ENCODE measurements at regions of chr6 and their contacts with region 1.

Region 1: DNA sequence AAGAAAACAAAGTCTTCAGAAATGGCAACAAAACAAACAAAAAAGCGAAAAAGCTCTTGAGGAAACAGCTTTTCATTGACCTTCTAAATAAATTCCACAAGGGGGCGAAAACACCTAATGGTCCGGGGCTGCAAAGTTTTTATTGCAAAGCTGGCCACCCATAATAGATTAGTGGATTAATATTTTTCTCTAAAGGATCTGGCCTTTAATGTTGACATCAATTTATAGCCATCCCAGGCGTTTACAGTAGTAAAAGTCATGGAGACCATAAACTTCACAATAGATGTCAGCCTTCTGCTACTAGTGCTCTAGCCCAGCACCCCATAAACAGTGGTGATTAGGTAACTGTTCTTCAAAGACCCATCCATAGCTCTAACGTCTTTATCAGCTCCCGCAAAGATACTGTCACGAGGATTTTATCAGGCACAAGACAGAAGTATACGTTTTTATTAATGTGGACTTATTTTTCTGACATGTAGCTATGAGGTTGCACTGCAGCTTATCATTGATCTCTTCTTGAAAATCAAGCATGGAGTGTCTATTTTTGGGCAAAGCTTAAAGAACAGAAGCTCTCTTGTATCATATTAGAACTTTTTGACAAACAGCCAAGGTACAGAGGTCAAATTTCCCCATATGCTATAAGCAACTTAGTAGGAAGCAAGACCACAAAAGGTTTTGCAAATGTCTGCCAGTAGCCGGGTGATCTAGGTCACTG is 4.7 kb downstream of the CITED2 start:
- DNase-seq: no peak
- ATAC-seq: peak in 1 of 2 donors; percentile 4
- H3K4me3 ChIP-seq: peak overlapping the region; percentile 6 to 97 (median 56)
- H3K27ac ChIP-seq: peak overlapping the region; percentile 94 to 97 (median 96)
- H3K4me1 ChIP-seq: peaks cover 24 to 30% of the 10 kb centered on the region in 2 donors
- H3K27me3 ChIP-seq: no peaks in the 10 kb centered on the region
- CTCF ChIP-seq: peak; percentile 44 to 78 (median 74)
- POLR2A ChIP-seq: no peak

Region 2: DNA sequence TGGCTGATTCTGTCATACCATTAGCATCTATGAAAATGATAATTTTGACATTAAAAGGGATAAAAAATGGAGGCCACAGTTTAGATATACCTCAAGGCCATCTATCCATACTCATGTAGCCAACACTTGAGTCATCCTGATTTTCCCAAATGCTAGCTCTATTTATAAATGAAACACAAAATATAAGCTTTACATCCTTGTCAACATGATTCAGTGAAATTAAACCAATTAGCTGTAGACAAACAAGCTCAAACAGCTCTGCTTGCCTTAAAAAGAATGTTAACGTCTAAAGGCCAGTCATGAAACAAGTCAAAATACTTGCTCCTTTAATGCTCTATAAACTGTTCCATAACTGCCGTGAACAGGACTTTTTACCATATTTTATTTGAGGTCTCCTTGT is 300.9 kb before region 1 on chr6:
- in situ Hi-C with region 1: no loop called
- intact Hi-C with region 1: no loop called
- DNase-seq: no peak
- ATAC-seq: no peak
- H3K4me3 ChIP-seq: no peak overlapping the region
- H3K27ac ChIP-seq: no peak overlapping the region
- H3K4me1 ChIP-seq: peaks cover 14 to 15% of the 10 kb centered on the region in 2 donors
- H3K27me3 ChIP-seq: no peaks in the 10 kb centered on the region
- CTCF ChIP-seq: no peak
- POLR2A ChIP-seq: no peak

Region 3: DNA sequence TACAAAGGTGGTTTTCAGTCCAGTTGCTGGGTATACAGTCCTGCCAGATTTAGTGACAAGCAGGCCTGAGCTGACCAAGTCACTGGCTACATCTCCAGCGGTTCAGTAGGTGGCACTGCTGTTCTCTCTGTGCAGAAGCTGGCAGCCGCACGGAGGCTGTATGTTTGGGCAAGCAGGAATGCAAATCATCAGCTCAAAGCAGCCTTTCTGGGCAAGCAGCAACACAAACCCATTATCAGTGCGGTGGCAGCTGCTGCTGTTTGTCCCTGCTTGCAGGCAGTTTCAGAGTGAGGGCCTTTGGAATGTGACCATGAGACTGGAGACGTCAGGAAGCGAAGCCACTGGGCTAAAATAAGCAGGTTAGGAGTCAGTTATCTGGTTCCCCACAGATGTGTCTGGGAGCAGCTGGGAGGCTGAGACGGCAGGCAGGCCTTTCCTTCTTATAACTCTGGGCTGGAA is 150.4 kb before region 1 on chr6:
- in situ Hi-C with region 1: loop called in 1 of 4 experiments (anchors 5 kb)
- intact Hi-C with region 1: loop called (anchors 1 kb)
- DNase-seq: peak; percentile 78 to 85
- ATAC-seq: peak; percentile 98 to 99
- H3K4me3 ChIP-seq: peak overlapping the region in 1 of 4 donors; percentile 3
- H3K27ac ChIP-seq: peak overlapping the region; percentile 41 to 76 (median 70)
- H3K4me1 ChIP-seq: peaks cover 0 to 4% of the 10 kb centered on the region in 2 donors
- H3K27me3 ChIP-seq: no peaks in the 10 kb centered on the region
- CTCF ChIP-seq: peak; percentile 73 to 90 (median 82)
- POLR2A ChIP-seq: peak in 1 of 2 donors; percentile 52

Region 4: DNA sequence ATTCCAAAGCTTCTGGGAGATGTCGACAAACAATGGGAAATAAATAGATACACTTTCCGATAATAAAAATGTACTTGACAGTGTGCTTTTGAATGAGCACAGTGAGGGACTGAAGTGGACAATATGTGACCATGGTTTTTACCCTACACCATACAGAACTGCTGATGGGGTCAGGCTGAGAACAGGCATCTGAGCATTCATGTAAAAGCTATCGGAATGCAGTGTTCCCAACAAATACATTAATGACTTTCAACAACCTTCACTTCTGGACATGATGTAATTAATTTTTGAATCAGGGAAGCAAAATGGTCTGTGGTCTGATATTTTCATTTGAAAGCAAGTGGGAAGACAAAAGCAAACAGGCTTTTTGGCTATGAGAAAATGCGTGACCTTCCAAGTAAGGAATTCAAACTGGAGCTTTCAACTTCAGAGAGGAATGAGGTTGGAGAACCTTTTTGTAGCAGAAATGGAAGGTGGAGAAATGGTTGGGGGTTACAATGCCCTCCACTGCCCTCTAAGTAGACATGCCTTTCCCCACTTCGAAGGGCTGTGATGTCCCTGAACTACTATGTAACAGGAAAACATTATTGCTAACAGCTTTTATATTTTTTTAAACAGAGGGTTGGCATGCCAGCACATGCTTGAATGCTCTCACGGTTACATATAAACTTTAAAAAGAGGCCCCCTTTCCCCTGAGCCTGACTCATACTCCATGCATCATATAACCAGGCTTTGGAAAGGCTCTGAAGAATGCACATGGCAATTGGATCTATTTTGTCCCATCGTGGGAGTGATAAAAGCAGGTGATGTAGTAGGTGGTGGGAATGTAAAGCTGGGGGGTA is 208.3 kb after region 1 on chr6:
- in situ Hi-C with region 1: no loop called
- intact Hi-C with region 1: no loop called
- DNase-seq: no peak
- ATAC-seq: no peak
- H3K4me3 ChIP-seq: no peak overlapping the region
- H3K27ac ChIP-seq: no peak overlapping the region
- H3K4me1 ChIP-seq: peaks cover 0 to 6% of the 10 kb centered on the region in 2 donors
- H3K27me3 ChIP-seq: no peaks in the 10 kb centered on the region
- CTCF ChIP-seq: no peak
- POLR2A ChIP-seq: no peak

Region 5: DNA sequence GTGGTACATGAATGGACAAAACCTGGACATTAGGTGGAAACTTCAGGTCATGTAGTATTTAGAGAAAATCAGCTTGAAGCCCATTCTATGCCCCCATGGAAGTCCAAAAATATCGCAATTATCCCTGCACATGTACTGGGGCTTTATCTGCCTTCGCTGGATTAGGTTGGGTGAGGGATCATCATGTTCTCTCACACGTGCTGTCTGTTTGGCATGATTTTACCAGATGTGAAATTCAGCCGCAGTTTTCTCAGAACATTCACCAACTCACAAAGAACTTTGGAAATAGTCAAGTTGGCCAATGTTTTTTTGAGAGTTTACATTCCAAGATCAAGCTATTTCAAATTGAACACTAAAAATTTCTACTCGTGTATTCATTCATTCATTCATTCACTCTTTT is 464.5 kb after region 1 on chr6:
- in situ Hi-C with region 1: no loop called
- intact Hi-C with region 1: loop called (anchors 2 kb)
- DNase-seq: peak in 1 of 2 donors; percentile 18
- ATAC-seq: peak; percentile 14 to 58
- H3K4me3 ChIP-seq: no peak overlapping the region
- H3K27ac ChIP-seq: no peak overlapping the region
- H3K4me1 ChIP-seq: peaks cover 20 to 25% of the 10 kb centered on the region in 2 donors
- H3K27me3 ChIP-seq: no peaks in the 10 kb centered on the region
- CTCF ChIP-seq: no peak
- POLR2A ChIP-seq: no peak

Region 6: GRCh38 chr6:140043336-140043735 is 673.6 kb after region 1 on chr6:
- in situ Hi-C with region 1: no loop called
- intact Hi-C with region 1: loop called (anchors 1 kb)
- DNase-seq: no peak
- ATAC-seq: peak; percentile 87 to 90
- H3K4me3 ChIP-seq: no peak overlapping the region
- H3K27ac ChIP-seq: peak overlapping the region; percentile 45 to 75 (median 55)
- H3K4me1 ChIP-seq: peaks cover 14 to 15% of the 10 kb centered on the region in 2 donors
- H3K27me3 ChIP-seq: no peaks in the 10 kb centered on the region
- CTCF ChIP-seq: no peak
- POLR2A ChIP-seq: no peak

Region 7: GRCh38 chr6:140921366-140922226 is 1551.9 kb after region 1 on chr6:
- in situ Hi-C with region 1: no loop called
- intact Hi-C with region 1: loop called (anchors 5 kb)
- DNase-seq: no peak
- ATAC-seq: no peak
- H3K4me3 ChIP-seq: no peak overlapping the region
- H3K27ac ChIP-seq: no peak overlapping the region
- H3K4me1 ChIP-seq: peaks cover 0 to 3% of the 10 kb centered on the region in 2 donors
- H3K27me3 ChIP-seq: no peaks in the 10 kb centered on the region
- CTCF ChIP-seq: peak in 4 of 5 experiments; percentile 11 to 61 (median 39)
- POLR2A ChIP-seq: no peak